ENCODE measurements at regions of chr5 and their contacts with region 1.

Region 1: GRCh38 chr5:13814302-13814701 is 130.2 kb downstream of the DNAH5 start:
- DNase-seq: no peak
- H3K4me3 ChIP-seq: no peak overlapping the region
- H3K27ac ChIP-seq: no peak overlapping the region
- H3K4me1 ChIP-seq: no peaks in the 10 kb centered on the region
- H3K27me3 ChIP-seq: no peaks in the 10 kb centered on the region
- CTCF ChIP-seq: 0 out of 2 replicates have a peak, but pooled peaks have one; percentile 34

Region 2: GRCh38 chr5:14547666-14548065 is 733.4 kb after region 1 on chr5:
- CTCF ChIA-PET with region 1: no interaction called
- POLR2A ChIA-PET with region 1: interaction called, 16 read pairs
- intact Hi-C with region 1: no loop called
- DNase-seq: no peak
- H3K4me3 ChIP-seq: no peak overlapping the region
- H3K27ac ChIP-seq: no peak overlapping the region
- H3K4me1 ChIP-seq: no peaks in the 10 kb centered on the region
- H3K27me3 ChIP-seq: 0 out of 2 replicates have a peak, but pooled peaks cover 10% of the 10 kb centered on the region
- CTCF ChIP-seq: no peak